ENCODE measurements at regions of chr7 and their contacts with region 1.

Region 1: GRCh38 chr7:7312323-7312722 is 130.0 kb downstream of the C1GALT1 start:
- DNase-seq: no peak
- ATAC-seq: no peak
- H3K4me3 ChIP-seq: no peak overlapping the region
- H3K27ac ChIP-seq: no peak overlapping the region
- H3K4me1 ChIP-seq: no peaks in the 10 kb centered on the region
- H3K27me3 ChIP-seq: peaks cover 10% of the 10 kb centered on the region; the same call in 1 of the 2 replicates
- CTCF ChIP-seq: no peak

Region 2: GRCh38 chr7:7228472-7228871 is 83.9 kb before region 1 on chr7:
- CTCF ChIA-PET with region 1: no interaction called
- POLR2A ChIA-PET with region 1: no interaction called
- in situ Hi-C with region 1: no loop called
- intact Hi-C with region 1: no loop called
- DNase-seq: no peak
- ATAC-seq: no peak
- H3K4me3 ChIP-seq: no peak overlapping the region
- H3K27ac ChIP-seq: no peak overlapping the region
- H3K4me1 ChIP-seq: no peaks in the 10 kb centered on the region
- H3K27me3 ChIP-seq: no peaks in the 10 kb centered on the region
- CTCF ChIP-seq: no peak

Region 3: GRCh38 chr7:7274782-7275181 is 37.5 kb before region 1 on chr7:
- CTCF ChIA-PET with region 1: no interaction called
- POLR2A ChIA-PET with region 1: no interaction called
- in situ Hi-C with region 1: no loop called
- intact Hi-C with region 1: loop called (anchors 5 kb)
- DNase-seq: no peak
- ATAC-seq: no peak
- H3K4me3 ChIP-seq: no peak overlapping the region
- H3K27ac ChIP-seq: no peak overlapping the region
- H3K4me1 ChIP-seq: no peaks in the 10 kb centered on the region
- H3K27me3 ChIP-seq: peaks cover 4% of the 10 kb centered on the region; the same call in 1 of the 2 replicates
- CTCF ChIP-seq: no peak